ENCODE measurements at regions of chr4 and their contacts with region 1.

Region 1: DNA sequence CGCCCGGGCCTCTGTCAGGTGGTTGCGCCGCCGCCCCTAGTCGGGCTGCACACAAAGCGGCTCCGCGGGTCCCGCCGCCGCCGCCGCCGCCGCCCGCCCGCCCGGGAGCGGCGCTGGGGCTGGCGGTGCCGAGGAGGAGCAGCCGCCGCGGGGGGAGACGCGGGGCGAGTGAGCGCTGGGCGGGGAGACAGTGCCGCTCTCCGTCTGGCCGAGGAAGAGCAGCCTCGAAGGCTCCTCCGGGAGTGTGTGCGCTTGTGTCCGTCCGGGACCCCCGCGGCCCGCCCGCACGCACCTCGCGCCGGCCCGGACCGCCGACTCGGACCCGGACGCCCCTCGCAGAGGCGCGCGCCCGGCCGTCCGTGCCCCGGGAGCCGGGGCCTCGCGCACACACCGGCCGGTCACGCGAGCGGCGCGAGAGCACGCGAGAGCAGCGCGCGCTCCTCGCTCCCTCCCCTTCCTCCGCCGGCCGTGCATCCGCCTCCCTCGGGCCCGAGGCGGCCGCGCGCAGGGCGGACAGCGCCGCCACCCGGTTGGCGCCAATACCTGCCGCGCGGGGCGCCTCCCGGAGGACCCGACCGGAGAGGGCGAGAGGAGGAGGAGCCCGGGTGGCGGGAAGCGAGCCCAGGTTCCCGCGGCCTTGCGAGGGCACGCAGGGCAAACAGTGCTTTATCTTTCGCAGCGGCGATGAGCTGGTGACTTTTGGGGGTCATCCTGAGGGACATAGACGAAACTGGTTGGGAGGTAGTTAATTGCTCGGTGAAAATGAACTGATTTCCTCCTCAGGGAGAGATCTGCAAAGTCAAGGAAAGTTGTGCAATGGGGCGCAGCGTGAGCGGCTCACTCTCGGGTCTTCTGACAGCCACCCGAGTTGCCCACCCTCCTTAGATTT is at the start of gene PDS5A:
- DNase-seq: peak; percentile 87 to 96 (median 92)
- ATAC-seq: peak; percentile 88 to 94 (median 90)
- H3K4me3 ChIP-seq: peak within 1 kb of the TSS; percentile 61 to 97 (median 95)
- H3K27ac ChIP-seq: peak within 1 kb of the TSS; percentile 72 to 93 (median 86)
- H3K4me1 ChIP-seq: peaks cover 7 to 20% (median 9%) of the 10 kb centered on the region in 3 donors
- H3K27me3 ChIP-seq: no peaks in the 10 kb centered on the region
- CTCF ChIP-seq: peak; percentile 78 to 84 (median 81)
- total RNA-seq, gene PDS5A: 24.4 to 42.6 (median 28.9) TPM

Region 2: GRCh38 chr4:39697740-39698423 is 279.9 kb before region 1 on chr4 and contains the start of gene UBE2K:
- intact Hi-C with region 1: loop called in 1 of 3 experiments (anchors 10 kb)
- DNase-seq: peak; percentile 86 to 96 (median 90)
- ATAC-seq: peak; percentile 92 to 95 (median 94)
- H3K4me3 ChIP-seq: peak within 1 kb of the TSS; percentile 79 to 84 (median 80)
- H3K27ac ChIP-seq: peak within 1 kb of the TSS; percentile 87 to 89 (median 88)
- H3K4me1 ChIP-seq: peaks cover 18 to 21% (median 20%) of the 10 kb centered on the region in 3 donors
- H3K27me3 ChIP-seq: no peaks in the 10 kb centered on the region
- CTCF ChIP-seq: no peak
- total RNA-seq, gene UBE2K: 15.8 to 32.4 (median 24.8) TPM

Measured in pancreas (tissue), 10 donors.